ENCODE measurements at regions of chr1 and their contacts with region 1.

Region 1: GRCh38 chr1:154485106-154485505 is 16.9 kb upstream of the TDRD10 start:
- DNase-seq: no peak

Region 2: DNA sequence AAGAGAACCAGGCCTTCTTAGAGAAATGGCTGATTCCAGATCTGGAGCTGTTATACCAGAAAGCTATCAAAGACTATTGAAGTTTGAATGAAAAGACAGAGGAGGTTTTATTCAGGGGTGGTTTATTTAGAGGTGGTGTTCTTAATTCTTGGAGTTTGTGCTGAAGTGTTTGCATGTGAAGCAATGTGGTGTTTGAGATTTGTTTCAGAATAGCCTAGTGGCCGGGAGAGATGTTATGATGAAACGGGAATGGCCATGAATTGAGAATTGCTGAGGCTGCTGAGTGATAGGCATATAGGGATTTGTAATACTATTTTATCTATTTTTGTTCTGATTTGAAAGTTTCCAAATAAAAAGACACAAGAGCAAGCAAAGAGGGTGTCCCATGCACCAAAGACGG is 27.7 kb after region 1 on chr1:
- intact Hi-C with region 1: no loop called
- DNase-seq: no peak

Region 3: DNA sequence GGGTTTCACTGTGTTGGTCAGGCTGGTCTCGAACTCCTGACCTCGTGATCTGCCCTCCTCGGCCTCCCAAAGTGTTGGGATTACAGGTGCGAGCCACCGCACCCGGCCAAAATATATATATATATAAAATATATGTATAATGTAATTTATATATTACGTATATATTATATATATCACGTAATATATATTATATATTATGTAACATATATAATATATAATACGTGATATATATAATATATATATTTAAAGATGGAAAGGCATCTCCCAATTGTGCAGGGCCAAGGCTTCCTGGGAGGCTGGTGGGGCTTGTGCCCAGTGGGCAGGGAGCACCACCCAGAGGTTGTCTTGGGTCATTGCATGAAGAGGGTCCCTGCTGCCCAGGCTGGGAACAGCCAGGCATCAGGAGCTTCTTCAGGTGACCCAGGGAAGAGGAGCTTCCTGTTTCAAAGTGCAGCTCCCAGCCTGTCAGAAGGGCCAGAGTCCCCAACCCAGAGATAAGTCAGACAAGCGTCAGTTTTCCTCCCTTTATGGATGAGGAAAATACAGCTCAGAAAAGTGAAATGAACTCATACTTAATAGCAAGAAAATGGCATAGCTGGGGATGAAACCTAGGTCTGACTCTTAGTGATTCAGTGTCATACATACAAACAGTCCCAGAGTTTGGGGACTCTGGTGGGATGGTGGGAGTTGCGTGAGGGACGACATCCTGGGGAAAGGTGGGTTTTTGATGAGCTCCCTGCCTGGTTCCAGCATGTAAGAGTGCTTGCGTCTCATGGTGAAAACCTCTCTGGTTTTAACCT is 61.4 kb after region 1 on chr1:
- intact Hi-C with region 1: loop called (anchors 5 to 10 kb)
- DNase-seq: no peak

Region 4: DNA sequence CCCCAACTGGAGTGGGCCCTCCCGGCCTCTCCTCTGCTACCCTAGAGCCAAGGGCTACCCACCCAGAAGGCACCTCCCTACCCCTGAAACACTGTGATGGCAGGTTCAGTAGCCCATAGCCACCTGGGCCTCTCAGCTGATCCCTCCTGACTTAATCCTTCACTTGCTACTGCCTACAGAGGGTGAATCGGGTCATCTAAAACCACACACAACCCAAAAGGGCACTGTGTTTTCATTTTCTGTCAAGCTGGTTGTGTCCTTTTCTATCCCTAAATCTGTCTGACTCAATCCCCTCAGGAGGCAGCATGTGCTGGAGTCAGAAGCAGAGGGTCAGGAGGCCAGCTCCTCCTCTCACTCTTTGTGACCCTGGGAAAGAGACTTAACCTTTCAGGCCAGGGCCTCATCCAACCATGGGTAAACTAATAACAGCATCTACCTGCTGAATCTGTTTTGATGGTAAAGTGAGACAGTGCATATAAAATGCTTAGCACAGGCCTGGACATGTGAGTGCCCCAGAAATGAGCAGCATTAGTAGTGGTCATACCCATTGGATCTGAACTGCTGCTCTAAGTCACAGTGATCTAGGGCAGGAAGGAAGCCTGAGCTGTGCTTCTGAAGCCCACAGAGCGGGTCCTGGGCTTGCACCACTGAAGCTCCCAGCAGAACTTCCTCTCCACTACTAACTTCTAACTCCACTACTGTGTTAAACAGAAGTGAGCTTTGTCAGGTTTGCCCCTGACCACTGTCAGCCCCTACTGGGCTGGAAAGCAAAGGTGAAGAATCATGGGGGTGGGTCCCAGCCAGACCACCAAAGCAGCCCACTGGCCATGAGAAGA is 440.4 kb after region 1 on chr1:
- intact Hi-C with region 1: no loop called
- DNase-seq: no peak